B cell (primary cell): ENCODE measurements at regions of chr11 and their contacts with region 1.

Region 1: DNA sequence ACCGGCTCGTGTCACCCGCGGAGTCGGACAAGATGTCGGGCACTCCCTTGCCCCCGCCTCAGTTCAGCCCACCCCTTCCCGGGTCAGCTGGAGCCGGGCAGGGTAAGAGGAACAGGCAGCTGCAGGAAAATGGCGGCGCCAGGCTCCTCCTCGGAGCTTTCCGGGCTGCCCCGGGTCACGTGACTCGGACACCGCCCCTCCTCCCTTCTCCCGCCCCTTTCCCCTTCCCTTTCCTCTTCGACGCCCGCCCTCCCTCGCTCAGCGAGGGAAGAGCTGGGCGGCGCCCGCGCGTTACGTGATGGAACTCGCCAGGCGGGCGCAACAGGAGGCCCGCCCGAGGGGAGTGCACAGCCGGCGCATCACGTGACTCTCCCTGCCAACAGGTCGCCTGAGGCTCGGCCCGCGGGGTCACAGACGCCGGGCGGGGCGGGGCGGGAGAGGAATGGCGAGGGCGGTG is at the start of gene PICALM:
- DNase-seq: peak; percentile 98
- ATAC-seq: peak; percentile 82
- H3K4me3 ChIP-seq: peak within 1 kb of the TSS; percentile 76 to 93 (median 86)
- H3K4me3 Mint-ChIP-seq: peak within 1 kb of the TSS; percentile 100
- H3K27ac ChIP-seq: peak within 1 kb of the TSS; percentile 88 to 95
- H3K27ac Mint-ChIP-seq: peak within 1 kb of the TSS; percentile 99
- H3K4me1 ChIP-seq: peaks cover 31% of the 10 kb centered on the region in 2 donors
- H3K4me1 Mint-ChIP-seq: peaks cover 42% of the 10 kb centered on the region
- H3K27me3 ChIP-seq: no peaks in the 10 kb centered on the region
- H3K27me3 Mint-ChIP-seq: no peaks in the 10 kb centered on the region
- CTCF ChIP-seq: no peak
- total RNA-seq, gene PICALM: 165 and 178 TPM in 2 replicates

Region 2: GRCh38 chr11:85627998-85628770 is 440.8 kb before region 1 on chr11 and contains the start of gene TMEM126B:
- CTCF ChIA-PET with region 1: interaction called, 3 read pairs
- POLR2A ChIA-PET with region 1: no interaction called
- intact Hi-C with region 1: loop called (anchors 1 kb)
- DNase-seq: peak; percentile 95
- ATAC-seq: peak; percentile 98
- H3K4me3 ChIP-seq: peak within 1 kb of the TSS; percentile 75 to 99 (median 85)
- H3K4me3 Mint-ChIP-seq: peak within 1 kb of the TSS; percentile 99
- H3K27ac ChIP-seq: peak within 1 kb of the TSS; percentile 65 to 87
- H3K27ac Mint-ChIP-seq: peak within 1 kb of the TSS; percentile 96
- H3K4me1 ChIP-seq: peaks cover 14 to 19% of the 10 kb centered on the region in 2 donors
- H3K4me1 Mint-ChIP-seq: peaks cover 28% of the 10 kb centered on the region
- H3K27me3 ChIP-seq: no peaks in the 10 kb centered on the region
- H3K27me3 Mint-ChIP-seq: peaks cover 5% of the 10 kb centered on the region
- CTCF ChIP-seq: no peak
- total RNA-seq, gene TMEM126B: 37.2 and 38.5 TPM in 2 replicates

Region 3: DNA sequence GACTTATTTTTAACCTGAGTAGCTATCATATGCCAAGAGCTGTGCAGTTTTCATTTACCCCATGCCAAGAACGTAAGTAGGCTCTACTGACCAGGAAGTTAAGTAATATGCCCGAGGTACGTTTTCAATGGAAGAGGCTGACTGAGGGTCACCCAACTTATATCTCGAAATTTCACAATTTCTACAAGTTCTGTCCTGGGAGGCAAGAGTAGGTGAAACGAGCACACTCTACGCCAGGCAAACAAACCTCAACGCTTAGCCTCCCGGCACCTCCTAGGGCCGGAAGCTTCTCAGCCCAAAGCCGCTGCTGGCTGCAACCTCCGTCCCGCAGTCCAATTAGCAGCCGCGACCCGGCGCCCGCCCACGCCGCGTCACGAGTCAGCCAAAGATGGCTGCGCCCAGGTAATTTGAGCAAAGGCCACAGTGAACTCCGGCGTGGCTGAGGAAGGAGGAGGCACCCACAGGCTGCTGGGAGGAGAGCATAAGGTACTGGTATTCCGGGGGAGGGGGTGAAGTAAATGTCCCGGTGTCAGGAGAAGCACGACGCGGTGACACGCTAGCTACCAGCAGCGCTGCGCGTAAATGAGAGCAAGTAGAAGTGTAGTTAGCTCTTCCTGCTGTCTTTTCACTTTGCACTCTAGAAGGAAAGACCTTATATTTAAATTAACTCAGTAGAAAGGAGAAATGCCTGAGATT is 421.2 kb before region 1 on chr11 and contains the start of gene TMEM126A:
- CTCF ChIA-PET with region 1: no interaction called
- POLR2A ChIA-PET with region 1: no interaction called
- intact Hi-C with region 1: loop called (anchors 2 kb)
- DNase-seq: peak; percentile 91
- ATAC-seq: peak; percentile 99
- H3K4me3 ChIP-seq: peak within 1 kb of the TSS; percentile 79 to 87 (median 85)
- H3K4me3 Mint-ChIP-seq: peak within 1 kb of the TSS; percentile 89
- H3K27ac ChIP-seq: peak within 1 kb of the TSS; percentile 71 to 91
- H3K27ac Mint-ChIP-seq: peak within 1 kb of the TSS; percentile 93
- H3K4me1 ChIP-seq: peaks cover 12 to 13% of the 10 kb centered on the region in 2 donors
- H3K4me1 Mint-ChIP-seq: peaks cover 18% of the 10 kb centered on the region
- H3K27me3 ChIP-seq: peaks cover 0 to 12% (median 4%) of the 10 kb centered on the region in 4 experiments
- H3K27me3 Mint-ChIP-seq: peaks cover 19% of the 10 kb centered on the region
- CTCF ChIP-seq: no peak
- total RNA-seq, gene TMEM126A: 13.0 and 15.8 TPM in 2 replicates

Region 4: DNA sequence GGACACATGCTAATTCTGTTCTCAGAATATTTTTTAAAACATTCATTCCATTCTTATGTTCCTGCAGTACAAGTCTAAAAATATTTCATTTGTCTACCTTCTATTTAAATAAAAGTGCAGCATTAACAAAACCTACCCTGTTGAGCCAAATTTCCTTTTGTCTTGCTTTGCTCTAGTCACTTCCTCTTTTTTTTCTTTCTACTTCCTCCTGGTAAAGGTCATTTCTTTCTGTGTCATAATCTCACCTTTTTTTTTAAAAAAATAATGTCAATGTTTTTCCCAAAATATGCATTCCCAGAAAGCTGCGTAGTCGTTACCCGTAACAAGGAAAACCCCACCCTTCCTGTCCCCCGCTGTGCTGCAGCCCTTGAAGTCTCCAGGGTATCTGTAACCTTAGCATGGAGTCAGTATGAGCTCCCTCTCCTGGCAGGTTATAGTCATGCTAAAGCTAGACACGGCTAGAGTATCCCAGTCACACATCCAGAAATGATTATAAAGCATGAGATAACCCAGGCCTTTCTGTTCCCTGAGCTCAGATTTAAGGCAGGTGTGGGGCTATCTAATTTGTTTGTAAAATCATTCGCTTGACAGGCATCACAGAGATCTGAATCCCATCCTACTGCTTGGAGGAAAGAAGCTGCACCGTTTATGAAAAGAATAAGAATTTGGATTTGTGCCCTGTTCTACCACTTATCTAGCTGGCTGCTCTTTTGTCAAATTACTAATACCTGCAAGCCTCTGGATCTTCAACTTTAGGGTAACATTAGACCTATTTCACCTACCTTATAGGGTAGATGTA is 124.5 kb after region 1 on chr11:
- CTCF ChIA-PET with region 1: interaction called, 45 read pairs
- POLR2A ChIA-PET with region 1: interaction called, 20 read pairs
- intact Hi-C with region 1: loop called (anchors 1 kb)
- DNase-seq: peak; percentile 80
- ATAC-seq: peak; percentile 94
- H3K4me3 ChIP-seq: peak overlapping the region; percentile 24 to 62 (median 52)
- H3K4me3 Mint-ChIP-seq: peak overlapping the region; percentile 67
- H3K27ac ChIP-seq: peak overlapping the region; percentile 21 to 70
- H3K27ac Mint-ChIP-seq: peak overlapping the region; percentile 90
- H3K4me1 ChIP-seq: peaks cover 20 to 22% of the 10 kb centered on the region in 2 donors
- H3K4me1 Mint-ChIP-seq: peaks cover 28% of the 10 kb centered on the region
- H3K27me3 ChIP-seq: no peaks in the 10 kb centered on the region
- H3K27me3 Mint-ChIP-seq: no peaks in the 10 kb centered on the region
- CTCF ChIP-seq: peak; percentile 79

Region 5: DNA sequence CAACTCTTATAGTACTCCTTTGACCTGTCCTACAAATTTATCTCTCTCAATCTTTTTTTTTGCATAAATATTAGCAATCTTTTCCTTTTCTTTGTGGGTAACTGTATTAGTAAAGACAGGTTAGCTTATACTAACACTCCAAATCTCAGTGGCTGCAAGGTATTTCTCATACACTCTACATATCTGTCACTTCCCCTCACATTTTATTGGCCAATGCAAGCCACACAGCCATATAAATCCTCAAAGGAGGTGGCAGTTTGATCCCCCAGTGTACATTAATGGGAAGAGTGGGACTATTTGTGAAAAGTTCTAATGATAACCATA is 133.0 kb after region 1 on chr11:
- CTCF ChIA-PET with region 1: interaction called, 12 read pairs
- POLR2A ChIA-PET with region 1: interaction called, 18 read pairs
- intact Hi-C with region 1: no loop called
- DNase-seq: no peak
- ATAC-seq: peak; percentile 46
- H3K4me3 ChIP-seq: peak overlapping the region; percentile 44 to 88 (median 61)
- H3K4me3 Mint-ChIP-seq: no peak overlapping the region
- H3K27ac ChIP-seq: peak overlapping the region; percentile 59 to 68
- H3K27ac Mint-ChIP-seq: no peak overlapping the region
- H3K4me1 ChIP-seq: peaks cover 22 to 32% of the 10 kb centered on the region in 2 donors
- H3K4me1 Mint-ChIP-seq: peaks cover 8% of the 10 kb centered on the region
- H3K27me3 ChIP-seq: no peaks in the 10 kb centered on the region
- H3K27me3 Mint-ChIP-seq: no peaks in the 10 kb centered on the region
- CTCF ChIP-seq: no peak

Region 6: GRCh38 chr11:86218125-86219084 is 149.4 kb after region 1 on chr11:
- CTCF ChIA-PET with region 1: interaction called, 4 read pairs
- POLR2A ChIA-PET with region 1: interaction called, 4 read pairs
- intact Hi-C with region 1: loop called (anchors 1 kb)
- DNase-seq: peak; percentile 65
- ATAC-seq: peak; percentile 29
- H3K4me3 ChIP-seq: peak overlapping the region in 4 of 5 experiments; percentile 21 to 53 (median 34)
- H3K4me3 Mint-ChIP-seq: peak overlapping the region; percentile 75
- H3K27ac ChIP-seq: peak overlapping the region; percentile 62 to 77
- H3K27ac Mint-ChIP-seq: peak overlapping the region; percentile 86
- H3K4me1 ChIP-seq: peaks cover 31 to 36% of the 10 kb centered on the region in 2 donors
- H3K4me1 Mint-ChIP-seq: peaks cover 37% of the 10 kb centered on the region
- H3K27me3 ChIP-seq: no peaks in the 10 kb centered on the region
- H3K27me3 Mint-ChIP-seq: no peaks in the 10 kb centered on the region
- CTCF ChIP-seq: peak; percentile 68

Region 7: DNA sequence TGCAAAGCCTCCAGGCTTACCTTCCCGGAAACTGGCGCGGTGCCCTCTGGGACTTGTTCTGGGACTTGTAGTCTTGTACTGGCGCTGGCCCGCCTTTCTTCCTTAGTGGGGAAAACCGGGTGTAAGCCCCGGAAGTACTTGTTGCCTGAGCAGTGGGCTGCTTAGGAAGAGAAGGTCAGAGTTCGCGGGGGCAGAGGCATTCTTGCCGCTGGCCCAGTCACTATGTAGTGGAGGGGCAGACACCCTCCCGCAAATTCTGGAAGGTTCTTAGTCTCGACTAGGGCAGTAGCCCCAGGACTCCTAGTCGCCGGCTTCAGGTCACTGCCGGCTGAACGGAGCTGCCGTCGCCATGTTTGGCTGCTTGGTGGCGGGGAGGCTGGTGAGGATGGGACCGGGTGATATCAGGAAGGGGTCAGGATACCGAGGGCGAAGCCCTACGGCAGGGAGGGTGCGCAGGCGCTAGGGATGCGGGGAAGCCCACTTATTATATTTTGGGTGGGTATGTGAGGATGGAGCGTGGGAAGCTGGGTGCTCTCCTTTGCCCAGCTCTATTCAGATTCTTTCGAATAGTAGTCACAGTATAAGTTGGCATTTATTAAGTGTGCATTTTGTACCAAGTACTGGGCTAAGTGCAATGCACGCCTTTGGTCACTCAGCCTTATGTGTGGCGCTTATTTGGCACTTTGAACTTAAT is 233.3 kb after region 1 on chr11 and contains the start of gene HIKESHI:
- CTCF ChIA-PET with region 1: interaction called, 3 read pairs
- POLR2A ChIA-PET with region 1: no interaction called
- intact Hi-C with region 1: loop called (anchors 1 kb)
- DNase-seq: peak; percentile 90
- ATAC-seq: peak; percentile 99
- H3K4me3 ChIP-seq: peak within 1 kb of the TSS; percentile 70 to 96 (median 92)
- H3K4me3 Mint-ChIP-seq: peak within 1 kb of the TSS; percentile 98
- H3K27ac ChIP-seq: peak within 1 kb of the TSS; percentile 70 to 95
- H3K27ac Mint-ChIP-seq: peak within 1 kb of the TSS; percentile 95
- H3K4me1 ChIP-seq: peaks cover 10 to 13% of the 10 kb centered on the region in 2 donors
- H3K4me1 Mint-ChIP-seq: peaks cover 20% of the 10 kb centered on the region
- H3K27me3 ChIP-seq: no peaks in the 10 kb centered on the region
- H3K27me3 Mint-ChIP-seq: no peaks in the 10 kb centered on the region
- CTCF ChIP-seq: no peak
- total RNA-seq, gene HIKESHI: 23.3 and 24.4 TPM in 2 replicates